ENCODE measurements at regions of chr15 and their contacts with region 1.

Region 1: GRCh38 chr15:40217159-40217824 is 21.6 kb upstream of the PAK6 start:
- DNase-seq: peak; percentile 12
- H3K4me3 ChIP-seq: no peak overlapping the region
- CTCF ChIP-seq: peak; percentile 60

Region 2: GRCh38 chr15:40044717-40045571 is 172.3 kb before region 1 on chr15:
- CTCF ChIA-PET with region 1: interaction called, 29 read pairs
- POLR2A ChIA-PET with region 1: no interaction called
- DNase-seq: no peak
- H3K4me3 ChIP-seq: peak overlapping the region; percentile 36
- CTCF ChIP-seq: peak; percentile 99

Region 3: DNA sequence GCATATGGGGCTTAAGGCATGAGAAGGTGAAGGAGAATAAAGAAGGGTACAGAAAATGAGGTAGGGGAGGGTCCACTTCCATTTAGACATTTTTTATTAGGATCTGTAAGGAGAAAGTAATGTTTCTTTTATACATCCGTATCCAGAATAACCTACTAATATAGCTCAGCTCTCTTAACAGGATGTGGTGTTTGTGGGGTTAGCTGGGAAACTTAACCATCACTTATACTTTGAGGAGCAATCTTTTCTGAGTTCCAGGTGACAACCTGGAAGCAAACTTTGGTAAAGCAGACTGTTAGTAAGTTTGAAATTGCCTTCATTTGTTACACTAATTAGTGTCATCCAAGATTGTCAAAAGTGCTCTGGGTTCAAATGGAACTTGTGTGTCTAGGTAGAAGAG is 19.9 kb before region 1 on chr15:
- CTCF ChIA-PET with region 1: interaction called, 80 read pairs
- POLR2A ChIA-PET with region 1: no interaction called
- DNase-seq: no peak
- H3K4me3 ChIP-seq: no peak overlapping the region
- CTCF ChIP-seq: no peak

Region 4: DNA sequence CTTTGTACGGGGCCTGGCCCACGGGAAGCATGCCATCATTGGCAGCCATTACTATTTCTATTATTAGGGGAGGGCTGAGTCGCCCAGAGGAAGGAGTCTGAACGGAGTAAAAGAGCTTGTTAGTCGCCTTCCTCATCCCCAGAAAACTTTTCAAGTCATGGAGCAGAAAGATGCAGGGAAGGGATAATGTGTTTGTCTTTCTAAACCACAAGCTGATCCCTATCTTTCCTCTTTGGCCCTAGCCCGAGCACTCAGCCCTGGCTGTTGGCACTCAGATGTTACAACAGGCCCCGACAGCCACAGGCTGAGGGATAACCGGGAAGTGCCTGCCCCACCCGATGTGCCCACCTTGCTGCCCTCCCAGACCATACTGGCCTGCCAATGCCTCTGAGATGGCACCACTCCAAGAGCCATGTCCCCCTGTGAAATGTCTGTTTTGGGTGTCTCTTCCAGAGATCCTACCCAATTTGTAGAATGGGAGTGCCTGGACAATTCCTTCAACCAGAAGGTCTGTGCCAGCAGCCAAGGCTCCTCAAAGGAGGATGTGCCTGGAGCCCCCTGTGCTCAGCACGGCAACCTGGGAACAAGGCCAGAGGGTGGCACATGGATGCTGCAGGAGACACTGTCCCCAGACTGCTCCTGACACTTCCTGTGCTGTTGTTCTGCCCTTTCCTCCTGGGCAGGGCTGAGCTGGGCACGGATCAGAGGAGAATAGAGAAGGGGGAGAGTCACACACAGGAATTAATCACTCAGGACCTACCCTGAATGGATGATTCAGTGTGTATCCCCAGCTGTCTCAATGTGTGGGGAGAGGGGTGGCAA is 32.4 kb after region 1 on chr15:
- CTCF ChIA-PET with region 1: interaction called, 58 read pairs
- POLR2A ChIA-PET with region 1: no interaction called
- DNase-seq: peak; percentile 41
- H3K4me3 ChIP-seq: no peak overlapping the region
- CTCF ChIP-seq: no peak

Region 5: GRCh38 chr15:40290918-40291574 is 73.8 kb after region 1 on chr15:
- CTCF ChIA-PET with region 1: interaction called, 28 read pairs
- POLR2A ChIA-PET with region 1: no interaction called
- DNase-seq: no peak
- H3K4me3 ChIP-seq: peak overlapping the region; percentile 45
- CTCF ChIP-seq: no peak

Region 6: DNA sequence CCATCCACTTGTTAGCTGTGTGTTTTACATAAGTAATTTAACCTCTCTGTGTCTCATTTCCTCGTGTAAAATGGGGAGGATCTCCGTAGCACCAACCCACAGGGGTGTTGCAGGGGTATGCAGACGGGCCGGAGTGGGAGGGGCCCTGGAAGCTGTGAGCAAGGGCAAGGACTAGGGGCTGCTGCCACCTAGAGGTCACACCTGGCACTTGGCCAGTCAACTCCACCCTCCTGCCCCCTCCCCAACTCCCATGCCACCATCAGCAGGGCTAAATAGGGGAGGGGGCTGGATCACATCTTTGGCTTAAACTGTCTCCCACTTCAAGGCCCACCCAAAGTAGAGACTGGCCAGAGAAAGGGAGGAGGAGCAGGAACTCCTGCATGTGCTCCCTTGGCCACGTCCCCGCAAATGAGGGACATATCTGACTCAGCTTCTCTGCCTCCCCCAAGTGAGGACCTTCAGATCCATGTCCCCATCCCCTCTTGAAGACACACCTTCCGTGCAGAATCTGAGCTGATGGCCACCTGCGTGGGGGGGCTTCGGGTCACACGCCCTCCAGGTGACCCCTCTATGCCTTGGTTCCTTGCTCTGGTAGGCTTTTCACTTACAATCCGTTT is 120.9 kb after region 1 on chr15:
- CTCF ChIA-PET with region 1: interaction called, 13 read pairs
- POLR2A ChIA-PET with region 1: no interaction called
- DNase-seq: no peak
- H3K4me3 ChIP-seq: peak overlapping the region; percentile 48
- CTCF ChIP-seq: peak; percentile 84

Measured in AG04449 (cell line).